ENCODE measurements at regions of chr15 and their contacts with region 1.

Region 1: GRCh38 chr15:38440353-38441129 is 13.4 kb upstream of the FAM98B start:
- DNase-seq: peak; percentile 50 to 81 (median 70)
- ATAC-seq: peak; percentile 83
- H3K4me3 ChIP-seq: no peak overlapping the region
- H3K27ac ChIP-seq: no peak overlapping the region
- H3K4me1 ChIP-seq: peaks cover 4 to 12% of the 10 kb centered on the region in 2 experiments; a peak in 3 of 5 replicates
- H3K27me3 ChIP-seq: no peaks in the 10 kb centered on the region
- CTCF ChIP-seq: peak; percentile 78 to 93 (median 90)
- EP300 ChIP-seq: no peak
- POLR2A ChIP-seq: no peak
- RAD21 ChIP-seq: peak; percentile 65 to 86

Region 2: DNA sequence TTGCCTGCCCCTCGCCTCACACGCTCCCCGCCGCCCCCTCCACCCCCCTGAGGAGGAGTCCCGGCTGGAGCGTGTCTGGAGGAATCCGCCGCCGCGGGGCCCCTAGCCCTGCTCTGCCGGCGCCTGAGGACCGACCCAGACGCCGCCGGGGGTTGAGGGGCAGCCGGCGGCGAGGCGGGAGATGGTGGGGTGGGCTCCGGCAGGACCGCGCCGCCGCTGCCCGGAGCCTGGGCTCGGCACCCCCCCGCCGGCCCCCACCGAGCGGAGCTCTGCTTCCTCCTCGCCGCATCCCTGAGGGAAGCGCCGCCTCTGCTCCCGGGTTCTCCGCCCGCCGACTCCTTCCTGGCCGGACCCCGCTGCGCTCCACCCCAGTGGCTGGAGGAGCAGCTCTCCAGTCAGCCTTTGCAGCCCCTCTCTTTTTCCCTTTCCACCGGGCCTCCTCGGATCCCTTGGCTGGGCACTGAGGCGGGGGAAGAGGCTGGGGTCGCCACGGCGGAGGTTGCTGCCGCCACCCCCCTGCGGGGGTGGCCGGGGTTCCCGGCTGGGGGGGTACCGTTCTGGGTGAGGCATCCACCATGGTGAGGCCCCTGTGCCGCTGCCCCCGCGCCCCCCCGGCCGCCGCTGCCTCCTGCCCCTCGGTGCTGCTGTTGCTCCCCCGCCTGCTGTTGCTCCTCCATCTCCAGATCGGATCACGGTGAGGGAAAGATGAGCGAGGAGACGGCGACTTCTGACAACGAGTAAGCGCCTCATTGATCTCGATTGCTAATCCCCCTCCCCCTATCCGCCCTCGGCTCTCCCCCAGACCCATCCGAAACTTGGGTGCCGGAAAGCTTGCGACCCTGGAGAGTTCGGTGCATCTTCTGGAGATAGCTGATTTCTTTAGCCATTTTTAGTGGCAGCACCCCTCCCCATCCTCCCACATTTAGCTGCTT is 187.8 kb before region 1 on chr15 and contains the start of gene SPRED1:
- CTCF ChIA-PET with region 1: no interaction called
- POLR2A ChIA-PET with region 1: no interaction called
- in situ Hi-C with region 1: no loop called
- intact Hi-C with region 1: loop called (anchors 5 kb)
- DNase-seq: peak; percentile 21 to 75 (median 48)
- ATAC-seq: peak; percentile 56
- H3K4me3 ChIP-seq: peak within 1 kb of the TSS; percentile 86
- H3K27ac ChIP-seq: peak within 1 kb of the TSS; percentile 83
- H3K4me1 ChIP-seq: peaks cover 0 to 7% of the 10 kb centered on the region in 2 experiments; a peak in 3 of 5 replicates
- H3K27me3 ChIP-seq: no peaks in the 10 kb centered on the region
- CTCF ChIP-seq: no peak
- EP300 ChIP-seq: no peak
- POLR2A ChIP-seq: no peak; the same call in 1 of the 2 replicates
- RAD21 ChIP-seq: no peak
- polyA plus RNA-seq, gene SPRED1: 2.8 to 3.6 TPM

Region 3: GRCh38 chr15:38474155-38474757 is 33.7 kb after region 1 on chr15:
- CTCF ChIA-PET with region 1: no interaction called
- POLR2A ChIA-PET with region 1: no interaction called
- in situ Hi-C with region 1: no loop called
- intact Hi-C with region 1: loop called (anchors 1 kb)
- DNase-seq: peak; percentile 35 to 58 (median 48)
- ATAC-seq: peak; percentile 92
- H3K4me3 ChIP-seq: no peak overlapping the region
- H3K27ac ChIP-seq: no peak overlapping the region
- H3K4me1 ChIP-seq: no peaks in the 10 kb centered on the region
- H3K27me3 ChIP-seq: no peaks in the 10 kb centered on the region
- CTCF ChIP-seq: peak; percentile 48 to 70 (median 69)
- EP300 ChIP-seq: no peak
- POLR2A ChIP-seq: no peak
- RAD21 ChIP-seq: peak; percentile 83 to 85

Region 4: GRCh38 chr15:38563723-38564519 is 123.4 kb after region 1 on chr15:
- CTCF ChIA-PET with region 1: no interaction called
- POLR2A ChIA-PET with region 1: interaction called, 4 read pairs
- in situ Hi-C with region 1: no loop called
- intact Hi-C with region 1: loop called (anchors 1 kb)
- DNase-seq: peak; percentile 72 to 81 (median 77)
- ATAC-seq: peak; percentile 94
- H3K4me3 ChIP-seq: peak overlapping the region; percentile 51
- H3K27ac ChIP-seq: no peak overlapping the region
- H3K4me1 ChIP-seq: peaks cover 0 to 16% of the 10 kb centered on the region in 2 experiments; a peak in 3 of 5 replicates
- H3K27me3 ChIP-seq: peaks cover 4 to 17% of the 10 kb centered on the region in 2 experiments; a peak in 3 of 5 replicates
- CTCF ChIP-seq: peak; percentile 75 to 88 (median 78)
- EP300 ChIP-seq: no peak
- POLR2A ChIP-seq: no peak
- RAD21 ChIP-seq: peak; percentile 77 to 79

Region 5: DNA sequence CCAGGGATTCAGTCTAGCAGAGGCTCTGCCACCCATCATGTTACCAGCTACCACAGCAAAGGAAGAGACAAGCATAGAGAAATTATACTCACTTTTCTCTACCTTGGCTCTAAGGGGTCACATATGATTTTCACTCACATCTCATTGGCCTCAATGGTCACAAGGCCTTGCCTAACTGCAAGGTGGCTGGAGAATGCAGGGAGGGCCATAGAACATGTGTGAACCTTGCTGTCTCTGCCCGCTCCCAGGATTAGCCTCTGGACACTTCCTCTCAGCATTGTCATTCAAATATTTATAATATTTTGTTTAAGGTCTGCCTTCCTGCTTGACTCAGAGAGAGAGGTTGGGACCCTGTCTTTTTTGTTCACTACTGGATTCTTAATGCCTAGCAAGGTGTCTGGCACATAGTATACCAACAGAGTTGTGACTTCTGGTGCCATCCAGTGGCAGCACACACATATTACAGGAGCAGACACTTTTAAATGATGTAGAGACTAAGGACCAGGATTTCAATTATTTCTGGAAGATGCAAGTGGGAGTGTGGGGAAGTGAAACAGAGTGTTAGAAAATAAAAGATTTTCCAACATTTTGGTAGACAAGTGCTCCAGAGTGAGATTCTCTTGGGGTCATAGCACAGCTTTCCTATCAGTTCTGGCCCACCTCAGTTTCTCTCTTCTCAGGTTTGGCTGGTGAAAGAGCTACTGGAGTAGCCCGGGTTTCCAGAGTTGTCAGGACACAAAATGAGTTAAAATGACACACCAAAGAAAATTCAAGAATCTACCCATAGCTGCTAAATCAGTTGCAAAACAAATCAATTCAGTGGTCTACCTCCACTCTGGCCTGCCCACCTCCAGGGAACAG is 243.1 kb after region 1 on chr15:
- CTCF ChIA-PET with region 1: no interaction called
- POLR2A ChIA-PET with region 1: interaction called, 4 read pairs
- in situ Hi-C with region 1: no loop called
- intact Hi-C with region 1: loop called (anchors 5 kb)
- DNase-seq: peak; percentile 28 to 62 (median 32)
- ATAC-seq: peak; percentile 88
- H3K4me3 ChIP-seq: no peak overlapping the region
- H3K27ac ChIP-seq: no peak overlapping the region
- H3K4me1 ChIP-seq: no peaks in the 10 kb centered on the region
- H3K27me3 ChIP-seq: peaks cover 0 to 2% of the 10 kb centered on the region in 2 experiments; a peak in 1 of 5 replicates
- CTCF ChIP-seq: peak; percentile 63 to 72 (median 65); a peak in 5 of 6 replicates
- EP300 ChIP-seq: no peak
- POLR2A ChIP-seq: no peak
- RAD21 ChIP-seq: peak; percentile 75 to 80

Measured in K562 (cell line).